ENCODE measurements at regions of chr16 and their contacts with region 1.

Region 1: GRCh38 chr16:11639925-11640899 is 28.0 kb upstream of the SNN start:
- DNase-seq: no peak
- CTCF ChIP-seq: no peak

Region 2: DNA sequence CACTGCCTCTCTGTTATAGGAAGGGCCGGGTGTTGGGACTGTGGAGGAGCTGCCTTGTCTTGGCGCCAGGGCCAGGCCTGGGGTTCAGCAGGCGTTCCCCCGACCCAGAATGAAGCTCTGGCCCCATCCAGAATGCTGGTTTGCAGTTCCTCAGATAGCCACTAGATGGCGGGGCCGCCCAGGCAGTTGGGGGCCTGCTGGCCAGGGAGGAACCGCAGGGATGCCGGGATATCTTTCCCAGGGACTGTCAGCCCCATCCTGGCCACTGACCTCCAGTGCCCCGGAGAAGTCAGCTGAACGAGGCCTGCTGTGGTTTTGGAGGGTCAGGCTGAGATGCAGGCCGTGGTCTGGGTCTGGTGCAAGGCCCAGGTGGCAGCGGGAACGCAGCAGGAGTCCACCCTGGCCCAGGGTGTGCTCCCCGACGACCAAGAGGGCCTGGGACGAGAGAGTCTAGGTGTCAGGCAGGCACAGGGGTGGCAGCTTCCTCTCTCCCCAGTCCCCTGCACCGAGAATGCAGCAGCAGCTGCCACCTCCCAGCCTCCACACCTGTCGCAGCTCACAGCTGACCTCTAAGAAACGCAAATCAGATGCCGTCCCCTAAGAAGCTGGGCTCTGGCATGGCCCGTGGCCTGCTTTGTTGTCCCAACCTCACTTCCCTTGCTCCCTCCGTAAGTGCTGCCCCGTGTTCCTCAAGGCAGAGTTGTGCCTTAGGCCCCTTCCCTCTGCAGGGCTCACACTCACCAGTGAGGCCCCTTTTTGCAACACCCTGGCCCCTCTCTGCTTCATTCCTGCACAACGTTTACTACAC is 243.8 kb before region 1 on chr16:
- in situ Hi-C with region 1: loop called (anchors 10 kb)
- DNase-seq: peak; percentile 91
- CTCF ChIP-seq: peak; percentile 97

Region 3: DNA sequence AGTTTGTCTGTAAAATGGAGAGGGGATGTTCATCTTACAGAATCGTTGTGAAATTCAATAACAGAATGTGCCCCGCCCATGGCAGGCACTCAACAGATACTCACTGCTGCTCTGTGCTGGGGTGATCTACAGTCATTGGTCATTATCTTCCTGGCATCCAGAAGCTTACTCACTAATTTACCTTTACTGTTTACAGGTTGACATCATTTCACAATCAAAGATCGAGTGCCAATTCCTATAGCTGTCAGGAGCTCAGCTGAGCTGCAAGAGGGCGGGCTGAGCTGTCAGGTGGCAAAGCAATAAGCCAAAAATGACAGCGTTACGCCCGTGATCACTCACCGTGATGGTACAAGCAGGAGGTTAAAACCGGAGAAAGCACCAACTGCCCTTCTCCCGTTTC is 104.7 kb before region 1 on chr16:
- in situ Hi-C with region 1: loop called (anchors 10 kb)
- DNase-seq: no peak
- CTCF ChIP-seq: no peak